H1 (cell line): ENCODE measurements at regions of chr3 and their contacts with region 1.

Region 1: DNA sequence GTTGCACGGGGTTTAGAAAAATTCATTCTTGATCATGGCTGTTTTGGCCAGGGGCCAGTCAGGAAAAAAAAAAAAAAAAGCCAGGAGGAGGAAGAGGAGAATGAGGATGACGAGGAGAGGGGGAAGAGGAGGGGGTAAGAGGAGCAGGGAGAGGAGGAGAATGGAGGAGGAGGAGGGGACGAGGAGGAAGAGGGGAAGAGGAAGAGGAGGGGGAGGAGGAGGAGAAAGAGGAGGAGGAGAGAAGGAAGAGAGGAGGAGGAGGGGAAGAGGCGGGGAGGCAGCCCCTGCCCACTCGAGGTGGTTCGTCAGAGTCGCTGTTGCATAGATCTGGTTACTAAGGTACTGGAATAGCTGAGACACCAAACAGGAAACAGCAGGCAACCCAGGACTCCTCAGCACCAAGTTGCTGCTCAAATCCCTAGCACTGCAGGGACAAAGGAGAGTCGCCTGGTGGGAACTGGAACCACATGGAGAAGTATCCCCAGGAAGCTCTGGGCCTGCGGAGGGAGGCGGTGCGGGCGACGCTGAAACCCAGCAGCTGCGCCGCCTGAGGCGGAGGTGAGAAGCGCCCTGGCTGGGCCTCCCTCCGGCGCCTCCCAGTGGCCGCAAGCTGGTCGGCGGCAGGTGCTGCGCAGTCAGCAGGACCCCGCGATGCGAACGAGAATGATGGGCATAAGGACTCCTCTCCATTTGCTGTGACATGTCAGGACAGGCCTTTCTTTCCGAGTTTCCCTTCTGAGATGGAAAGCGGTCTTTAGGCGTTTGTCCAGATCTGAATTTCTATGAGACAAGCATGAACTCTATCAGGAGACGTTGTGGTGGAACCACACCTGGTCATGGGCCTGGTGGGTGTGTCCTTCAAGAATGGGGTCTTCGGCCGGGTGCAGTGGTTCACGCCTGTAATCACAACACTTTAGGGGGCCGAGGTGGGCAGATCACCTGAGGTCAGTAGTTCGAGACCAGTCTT is 17.5 kb downstream of the FAM240A start:
- DNase-seq: peak; percentile 83 to 89
- H3K4me3 ChIP-seq: peak overlapping the region in 3 of 4 experiments; percentile 4 to 47 (median 15); a peak in 4 of 8 replicates
- H3K27ac ChIP-seq: 0 out of 2 replicates have a peak overlapping the region, but pooled peaks have one; percentile 20
- H3K4me1 ChIP-seq: peaks cover 6 to 17% (median 8%) of the 10 kb centered on the region in 4 experiments; a peak in 6 of 7 replicates
- H3K27me3 ChIP-seq: no peaks in the 10 kb centered on the region
- CTCF ChIP-seq: peak; percentile 98 to 100 (median 99)
- EP300 ChIP-seq: no peak; a peak in 1 of 3 replicates
- POLR2A ChIP-seq: no peak
- RAD21 ChIP-seq: peak; percentile 75 to 89

Region 2: DNA sequence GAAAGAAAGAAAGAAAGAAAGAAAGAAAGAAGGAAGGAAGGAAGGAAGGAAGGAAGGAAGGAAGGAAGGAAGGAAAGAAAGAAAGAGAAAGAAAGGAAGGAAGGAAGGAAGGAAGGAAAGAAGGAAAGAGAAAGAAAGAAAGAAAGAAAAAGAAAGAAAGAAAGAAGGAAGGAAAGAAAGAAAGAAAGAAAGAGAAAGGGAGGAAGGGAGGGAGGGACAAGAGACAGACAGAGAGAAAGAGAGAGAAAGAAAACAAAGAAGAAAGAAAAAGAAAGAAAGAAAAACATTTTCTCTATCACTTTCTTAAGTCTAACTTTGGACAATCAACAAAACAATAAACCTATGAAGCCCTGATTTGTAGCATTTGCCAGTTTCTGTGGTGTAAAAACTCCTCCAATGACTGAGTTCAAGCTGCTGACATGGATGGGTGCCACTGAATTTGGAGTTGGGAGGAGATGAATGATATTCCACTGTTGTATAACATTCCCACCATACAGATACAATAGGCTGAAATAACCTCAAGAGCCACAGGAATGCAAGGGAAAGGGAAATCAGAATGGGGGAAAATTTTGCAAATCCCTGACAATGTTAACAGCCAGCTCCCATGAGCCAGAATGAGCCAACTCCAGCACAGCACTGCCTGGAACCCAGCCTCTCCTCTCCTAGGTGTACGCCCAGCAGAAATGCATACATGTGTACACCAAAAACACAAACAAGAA is 147.0 kb before region 1 on chr3:
- CTCF ChIA-PET with region 1: interaction called, 82 read pairs
- POLR2A ChIA-PET with region 1: no interaction called
- DNase-seq: no peak
- H3K4me3 ChIP-seq: no peak overlapping the region
- H3K27ac ChIP-seq: no peak overlapping the region
- H3K4me1 ChIP-seq: no peaks in the 10 kb centered on the region
- H3K27me3 ChIP-seq: no peaks in the 10 kb centered on the region
- CTCF ChIP-seq: no peak
- EP300 ChIP-seq: no peak
- POLR2A ChIP-seq: no peak
- RAD21 ChIP-seq: no peak

Region 3: DNA sequence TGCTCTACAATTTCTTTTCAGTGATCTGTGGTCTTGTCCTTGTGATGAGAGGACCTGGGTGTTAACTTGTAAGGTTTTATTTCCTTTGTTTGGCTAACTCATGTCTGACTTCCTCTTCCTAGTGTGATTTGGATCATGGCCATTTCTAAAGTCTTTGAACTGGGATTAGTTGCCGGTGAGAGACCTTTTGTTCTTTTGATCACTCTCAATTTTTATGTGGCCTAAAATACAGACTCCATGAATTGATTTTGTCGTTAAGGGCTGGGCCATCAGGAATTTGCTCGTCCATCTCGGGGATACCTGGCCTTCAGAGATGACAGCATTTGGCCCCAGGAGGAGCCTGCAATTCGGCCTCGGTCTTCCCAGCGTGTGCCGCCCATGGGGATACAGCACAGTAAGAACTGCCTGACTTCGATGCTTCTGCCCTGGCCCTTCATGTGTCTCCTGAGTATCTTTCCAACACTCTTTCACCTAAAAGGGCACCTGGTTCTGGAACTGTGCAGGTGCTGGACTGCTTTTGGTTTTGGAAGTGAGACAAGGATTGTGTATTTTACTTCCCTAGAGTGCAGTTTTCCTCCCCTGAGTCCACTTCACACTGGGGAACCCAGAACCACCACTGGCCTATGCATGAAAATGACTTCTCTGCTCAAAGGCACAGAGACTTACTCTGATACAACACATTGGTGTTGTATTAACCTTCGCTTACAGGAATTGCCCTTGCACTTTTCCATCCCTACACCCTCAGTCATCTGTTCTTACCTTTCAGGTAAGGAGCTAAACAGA is 50.7 kb before region 1 on chr3:
- CTCF ChIA-PET with region 1: interaction called, 35 read pairs
- POLR2A ChIA-PET with region 1: interaction called, 64 read pairs
- DNase-seq: no peak
- H3K4me3 ChIP-seq: peak overlapping the region; percentile 54 to 97 (median 76)
- H3K27ac ChIP-seq: peak overlapping the region; percentile 8; the same call in 1 of the 2 replicates
- H3K4me1 ChIP-seq: peaks cover 9 to 25% (median 15%) of the 10 kb centered on the region in 4 experiments; a peak in 6 of 7 replicates
- H3K27me3 ChIP-seq: no peaks in the 10 kb centered on the region; a peak in 2 of 7 replicates
- CTCF ChIP-seq: no peak
- EP300 ChIP-seq: no peak
- POLR2A ChIP-seq: no peak
- RAD21 ChIP-seq: no peak

Region 4: GRCh38 chr3:46593274-46593862 is 36.5 kb before region 1 on chr3:
- CTCF ChIA-PET with region 1: interaction called, 35 read pairs
- POLR2A ChIA-PET with region 1: interaction called, 64 read pairs
- DNase-seq: no peak
- H3K4me3 ChIP-seq: no peak overlapping the region
- H3K27ac ChIP-seq: no peak overlapping the region
- H3K4me1 ChIP-seq: no peaks in the 10 kb centered on the region
- H3K27me3 ChIP-seq: 0 out of 7 replicates have a peak, but pooled peaks cover 0 to 3% (median 0%) of the 10 kb centered on the region in 4 experiments
- CTCF ChIP-seq: peak in 2 of 3 experiments; percentile 14 to 34; a peak in 3 of 4 replicates
- EP300 ChIP-seq: no peak
- POLR2A ChIP-seq: no peak
- RAD21 ChIP-seq: peak; percentile 38 to 53

Region 5: GRCh38 chr3:46640927-46641326 is 11.1 kb after region 1 on chr3:
- CTCF ChIA-PET with region 1: interaction called, 27 read pairs
- POLR2A ChIA-PET with region 1: no interaction called
- DNase-seq: no peak
- H3K4me3 ChIP-seq: no peak overlapping the region
- H3K27ac ChIP-seq: no peak overlapping the region
- H3K4me1 ChIP-seq: no peaks in the 10 kb centered on the region
- H3K27me3 ChIP-seq: no peaks in the 10 kb centered on the region
- CTCF ChIP-seq: no peak
- EP300 ChIP-seq: no peak
- POLR2A ChIP-seq: no peak
- RAD21 ChIP-seq: no peak